Esophagus squamous epithelium (tissue), 5 donors: ENCODE measurements at regions of chr17 and their contacts with region 1.

Region 1: DNA sequence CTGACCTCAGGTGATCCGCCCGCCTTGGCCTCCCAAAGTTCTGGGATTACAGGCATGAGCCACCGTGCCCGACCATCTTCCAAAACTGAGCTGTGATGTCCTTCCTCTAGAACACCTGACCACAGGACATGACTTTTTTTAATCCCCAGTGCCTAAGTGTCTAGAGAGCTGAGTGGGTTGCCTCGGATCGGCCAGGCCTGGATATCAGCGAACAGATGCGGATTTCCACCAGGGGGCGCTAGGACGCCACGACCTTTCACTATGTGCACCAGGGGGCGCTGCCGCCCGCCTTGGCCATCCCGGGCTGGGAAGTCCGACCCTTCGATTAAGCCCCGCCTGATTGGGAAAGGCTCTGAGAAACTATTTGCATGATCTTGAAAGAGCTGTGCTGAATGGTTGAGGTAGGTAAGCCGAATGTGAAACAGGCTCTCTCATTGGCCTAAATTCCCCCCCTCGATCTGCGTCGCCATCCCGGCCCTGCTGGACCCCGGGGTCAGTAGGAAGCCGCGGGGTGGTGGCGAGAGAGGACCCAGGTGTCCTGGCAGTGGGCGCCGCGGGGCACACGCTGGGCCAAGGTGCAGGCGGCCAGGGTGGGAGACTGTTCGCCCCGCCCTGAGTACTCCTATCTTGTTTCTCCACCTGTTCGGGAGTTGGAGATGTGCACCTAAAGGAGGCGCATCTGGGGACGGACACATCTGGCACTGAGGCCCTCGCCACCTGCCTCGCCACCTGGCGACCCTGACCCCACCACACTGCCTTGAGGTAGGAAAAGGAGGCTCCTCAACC is at the start of gene ACBD4:
- DNase-seq: peak; percentile 86
- H3K4me3 ChIP-seq: peak within 1 kb of the TSS; percentile 61 to 81 (median 71)
- H3K27ac ChIP-seq: peak within 1 kb of the TSS; percentile 83 to 92 (median 88)
- H3K4me1 ChIP-seq: peaks cover 20 to 60% (median 26%) of the 10 kb centered on the region in 3 donors
- H3K27me3 ChIP-seq: no peaks in the 10 kb centered on the region
- CTCF ChIP-seq: peak; percentile 99 to 100 (median 100)
- POLR2A ChIP-seq: peak in 2 of 4 donors; percentile 43 to 68
- total RNA-seq, gene ACBD4: 1.7 to 6.9 (median 4.5) TPM

Region 2: DNA sequence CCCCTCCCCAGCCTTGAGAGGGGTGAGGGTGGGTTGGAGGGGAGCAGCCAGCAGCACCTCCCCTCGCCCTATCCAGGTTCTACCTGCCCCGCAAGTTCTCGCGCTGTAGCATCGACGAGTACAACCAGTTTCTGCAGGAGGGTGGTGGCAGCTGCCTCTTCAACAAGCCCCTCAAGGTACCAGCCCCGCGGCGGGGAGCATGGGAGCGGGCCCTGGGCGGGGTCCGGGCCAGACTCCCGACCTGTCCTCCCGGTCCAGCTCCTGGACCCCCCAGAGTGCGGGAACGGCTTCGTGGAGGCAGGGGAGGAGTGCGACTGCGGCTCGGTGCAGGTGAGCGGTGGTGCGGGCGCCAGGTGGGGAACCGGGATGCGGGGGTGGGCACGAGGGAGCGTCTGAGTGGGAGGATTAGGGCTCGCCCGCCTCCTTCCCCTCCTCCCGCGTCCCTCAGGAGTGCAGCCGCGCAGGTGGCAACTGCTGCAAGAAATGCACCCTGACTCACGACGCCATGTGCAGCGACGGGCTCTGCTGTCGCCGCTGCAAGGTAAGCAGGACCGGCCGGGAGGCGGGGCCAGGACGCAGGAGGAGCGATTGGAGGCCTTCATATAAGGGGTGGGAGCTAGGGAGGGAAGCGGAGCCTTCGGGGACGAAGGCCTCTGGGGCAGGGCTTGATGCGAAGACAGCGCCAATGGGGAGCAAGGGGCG is 360.1 kb before region 1 on chr17:
- intact Hi-C with region 1: loop called (anchors 5 kb)
- DNase-seq: peak; percentile 88
- H3K4me3 ChIP-seq: peak overlapping the region; percentile 55 to 79 (median 62)
- H3K27ac ChIP-seq: peak overlapping the region; percentile 43 to 82 (median 64)
- H3K4me1 ChIP-seq: peaks cover 19 to 44% (median 28%) of the 10 kb centered on the region in 3 donors
- H3K27me3 ChIP-seq: peaks cover 0 to 72% (median 0%) of the 10 kb centered on the region in 4 donors
- CTCF ChIP-seq: peak in 1 of 6 experiments; percentile 48
- POLR2A ChIP-seq: no peak

Region 3: DNA sequence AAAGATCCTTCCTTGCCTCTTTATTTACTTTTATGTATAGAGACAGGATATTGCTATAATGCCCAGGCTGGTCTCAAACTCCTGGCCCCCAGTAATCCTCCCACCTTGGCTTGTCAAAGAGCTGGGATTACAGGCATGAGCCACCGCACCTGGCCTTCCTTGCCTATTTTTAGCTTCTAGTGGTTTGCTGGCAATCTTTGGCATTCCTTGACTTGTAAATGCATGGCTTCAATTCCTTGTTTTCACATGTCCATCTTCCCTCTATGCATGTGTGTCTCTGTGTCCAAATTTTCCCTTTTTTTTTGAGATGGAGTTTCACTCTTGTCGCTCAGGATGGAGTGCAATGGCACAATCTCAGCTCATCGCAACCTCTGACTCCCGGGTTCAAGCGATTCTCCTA is 48.8 kb after region 1 on chr17:
- intact Hi-C with region 1: no loop called
- DNase-seq: no peak
- H3K4me3 ChIP-seq: no peak overlapping the region
- H3K27ac ChIP-seq: no peak overlapping the region
- H3K4me1 ChIP-seq: no peaks in the 10 kb centered on the region
- H3K27me3 ChIP-seq: no peaks in the 10 kb centered on the region
- CTCF ChIP-seq: no peak
- POLR2A ChIP-seq: no peak

Region 4: GRCh38 chr17:45197555-45198334 is 62.4 kb after region 1 on chr17:
- intact Hi-C with region 1: loop called (anchors 1 kb)
- DNase-seq: peak; percentile 39
- H3K4me3 ChIP-seq: peak overlapping the region in 2 of 4 donors; percentile 14 to 24
- H3K27ac ChIP-seq: peak overlapping the region; percentile 35 to 62 (median 54)
- H3K4me1 ChIP-seq: peaks cover 10 to 39% (median 14%) of the 10 kb centered on the region in 3 donors
- H3K27me3 ChIP-seq: no peaks in the 10 kb centered on the region
- CTCF ChIP-seq: peak; percentile 98 to 99 (median 99)
- POLR2A ChIP-seq: no peak